Left cardiac atrium (tissue), 4 donors: ENCODE measurements at regions of chr15 and their contacts with region 1.

Region 1: DNA sequence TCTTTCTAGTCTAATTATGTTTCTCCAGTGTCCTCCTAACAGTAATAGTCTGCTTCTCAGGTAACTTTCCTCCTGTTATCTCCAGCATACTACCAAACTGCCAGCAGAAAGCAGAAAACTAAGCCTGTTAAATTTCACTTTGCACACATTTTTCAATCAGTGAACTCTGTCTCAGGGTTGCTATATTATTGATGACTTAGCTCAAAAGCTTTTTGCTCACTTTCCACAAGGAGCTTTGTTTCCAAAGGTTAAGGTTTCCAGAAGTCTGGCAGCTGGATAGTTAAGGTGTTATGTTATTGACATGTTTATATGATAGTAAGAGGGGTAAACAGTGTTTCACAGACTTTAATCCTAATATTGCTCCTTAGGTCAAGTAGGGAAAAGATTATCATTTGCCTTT is 5.1 kb downstream of the TRPM7 start:
- DNase-seq: no peak
- ATAC-seq: no peak

Region 2: GRCh38 chr15:50613600-50613999 is 67.9 kb before region 1 on chr15:
- intact Hi-C with region 1: no loop called
- DNase-seq: no peak
- ATAC-seq: no peak

Region 3: GRCh38 chr15:50718700-50719125 is 37.2 kb after region 1 on chr15:
- intact Hi-C with region 1: loop called in 1 of 2 experiments (anchors 5 kb)
- DNase-seq: no peak
- ATAC-seq: no peak